Activated naive CD4-positive, alpha-beta T cell treated with anti-CD3 and anti-CD28 coated beads for 36 hours (primary cell): ENCODE measurements at regions of chr10 and their contacts with region 1.

Region 1: GRCh38 chr10:71957546-71958275 is 6.5 kb upstream of the CHST3 start:
- DNase-seq: no peak
- H3K4me3 Mint-ChIP-seq: no peak overlapping the region
- H3K27ac Mint-ChIP-seq: no peak overlapping the region
- H3K4me1 Mint-ChIP-seq: no peaks in the 10 kb centered on the region
- H3K27me3 Mint-ChIP-seq: peaks cover 9% of the 10 kb centered on the region

Region 2: GRCh38 chr10:71501402-71501801 is 456.3 kb before region 1 on chr10:
- CTCF ChIA-PET with region 1: no interaction called
- intact Hi-C with region 1: no loop called
- DNase-seq: no peak
- H3K4me3 Mint-ChIP-seq: no peak overlapping the region
- H3K27ac Mint-ChIP-seq: no peak overlapping the region
- H3K4me1 Mint-ChIP-seq: no peaks in the 10 kb centered on the region
- H3K27me3 Mint-ChIP-seq: no peaks in the 10 kb centered on the region

Region 3: DNA sequence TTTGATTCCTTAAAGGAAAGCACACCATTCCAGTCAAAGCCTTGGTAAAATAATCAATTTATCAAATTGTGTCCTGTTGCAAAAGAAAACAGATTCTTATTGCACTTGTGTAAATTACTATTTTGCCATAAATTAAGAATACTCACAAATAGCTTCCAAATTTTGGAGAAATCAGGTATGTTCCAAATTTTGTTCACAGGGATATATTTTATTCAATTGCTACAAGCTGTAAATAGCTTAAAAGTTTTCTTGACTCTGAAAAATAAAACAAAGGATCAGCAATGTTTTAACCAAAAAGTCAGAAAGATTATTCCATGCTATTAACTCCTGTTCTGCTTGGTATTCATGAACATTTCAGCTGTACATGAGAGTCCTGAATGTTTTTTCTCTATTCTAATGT is 40.9 kb before region 1 on chr10:
- CTCF ChIA-PET with region 1: no interaction called
- intact Hi-C with region 1: loop called (anchors 5 kb)
- DNase-seq: no peak
- H3K4me3 Mint-ChIP-seq: no peak overlapping the region
- H3K27ac Mint-ChIP-seq: no peak overlapping the region
- H3K4me1 Mint-ChIP-seq: peaks cover 2% of the 10 kb centered on the region
- H3K27me3 Mint-ChIP-seq: no peaks in the 10 kb centered on the region